Head of caudate nucleus (tissue), 42 donors: ENCODE measurements at regions of chr20 and their contacts with region 1.

Region 1: DNA sequence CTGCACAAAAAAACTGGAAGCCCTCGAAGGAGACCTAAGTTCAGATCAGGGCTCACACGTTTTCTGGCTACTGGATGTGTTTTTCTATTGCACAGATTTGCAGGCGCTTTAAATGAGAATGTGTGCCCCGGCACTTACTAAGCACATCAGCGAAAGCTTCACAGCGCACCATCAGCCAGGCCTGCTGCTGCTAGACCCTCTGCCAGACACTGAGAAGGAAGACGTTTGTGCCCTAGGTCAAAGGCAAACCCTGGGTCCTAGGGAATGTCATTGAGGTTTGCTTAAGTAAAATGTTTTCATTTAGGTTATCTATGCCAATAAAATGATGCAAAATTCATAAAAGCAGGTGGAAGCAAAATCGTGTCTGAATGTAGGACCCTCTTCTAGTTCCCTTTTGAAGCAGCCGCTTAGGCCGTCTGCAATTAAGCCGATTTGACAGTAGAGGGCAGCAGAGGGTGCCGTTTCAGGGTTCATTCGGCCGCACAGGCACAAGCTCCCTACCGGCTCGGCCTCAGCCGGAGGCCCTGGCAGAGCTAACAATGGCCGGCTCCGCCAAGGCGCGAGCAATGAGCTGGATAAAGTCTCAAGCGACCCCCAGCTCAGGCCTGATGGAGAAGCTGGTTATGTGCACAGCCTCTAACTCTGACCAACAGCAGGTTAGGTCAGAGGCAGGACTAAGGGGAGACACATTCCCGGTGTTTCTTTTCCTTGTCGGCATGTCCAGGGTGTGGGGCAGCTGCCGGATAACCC is 107.2 kb upstream of the FOXA2 start:
- DNase-seq: peak; percentile 62 to 90 (median 79)

Region 2: DNA sequence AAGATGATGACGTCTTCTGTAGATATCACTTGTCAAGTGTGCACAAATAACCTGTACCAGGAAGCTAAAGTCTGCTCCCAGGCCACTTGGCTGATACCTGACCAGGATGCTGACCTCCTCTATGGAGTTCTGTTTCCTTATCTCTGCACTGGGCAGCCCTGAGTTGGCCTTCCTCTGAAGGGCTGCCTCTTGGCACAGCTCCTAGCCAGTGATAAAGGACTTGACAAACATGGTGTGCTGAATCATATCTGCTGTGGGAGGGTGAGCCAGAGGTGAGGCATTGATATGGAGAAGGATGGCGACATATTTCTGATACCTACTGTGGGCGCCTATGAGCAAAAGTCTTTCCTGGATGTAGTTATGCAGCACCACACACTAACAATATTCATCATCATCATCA is 74.4 kb before region 1 on chr20:
- intact Hi-C with region 1: no loop called
- DNase-seq: no peak

Region 3: DNA sequence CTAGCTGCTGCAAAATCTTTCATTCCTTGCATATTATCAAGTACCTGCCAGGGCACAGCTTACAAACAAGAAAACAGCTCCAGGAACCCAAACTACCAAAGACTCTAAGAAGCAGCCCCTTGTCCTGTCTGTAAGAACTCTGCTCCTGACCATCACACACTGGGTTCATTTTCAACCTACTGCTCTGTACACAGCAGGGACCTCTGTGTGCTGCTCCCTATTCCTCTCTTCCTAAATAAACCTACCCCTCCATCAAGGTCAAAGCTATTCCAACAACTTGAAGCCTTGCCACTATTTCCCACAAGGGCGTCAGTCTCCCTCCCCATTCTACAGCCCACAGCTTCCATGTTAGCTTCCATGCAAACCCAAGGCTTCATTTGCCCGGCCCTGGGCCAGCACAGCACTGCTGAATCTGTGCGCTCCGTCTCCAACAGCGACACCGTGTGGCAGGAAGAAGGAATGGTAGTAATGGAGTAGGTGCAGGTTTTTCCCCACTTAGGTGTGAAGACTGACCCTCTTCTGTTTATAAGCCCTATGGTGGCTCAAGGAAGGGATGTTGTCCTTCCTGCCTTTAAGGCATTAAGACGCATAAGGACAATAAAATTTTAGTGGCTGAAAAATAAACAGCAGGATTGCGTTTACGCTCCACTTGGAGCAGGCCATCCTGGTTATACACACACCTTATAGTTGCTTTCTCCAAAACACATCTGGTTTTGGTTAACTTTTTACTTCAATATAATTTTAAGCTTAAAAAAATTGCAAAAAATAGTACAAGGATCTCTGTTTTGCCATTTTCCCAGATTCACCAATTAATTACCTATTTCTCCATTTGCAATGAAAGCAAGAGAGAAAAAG is 543.9 kb after region 1 on chr20:
- intact Hi-C with region 1: loop called (anchors 10 kb)
- DNase-seq: peak in 32 of 42 donors; percentile 19 to 76 (median 50)

Region 4: DNA sequence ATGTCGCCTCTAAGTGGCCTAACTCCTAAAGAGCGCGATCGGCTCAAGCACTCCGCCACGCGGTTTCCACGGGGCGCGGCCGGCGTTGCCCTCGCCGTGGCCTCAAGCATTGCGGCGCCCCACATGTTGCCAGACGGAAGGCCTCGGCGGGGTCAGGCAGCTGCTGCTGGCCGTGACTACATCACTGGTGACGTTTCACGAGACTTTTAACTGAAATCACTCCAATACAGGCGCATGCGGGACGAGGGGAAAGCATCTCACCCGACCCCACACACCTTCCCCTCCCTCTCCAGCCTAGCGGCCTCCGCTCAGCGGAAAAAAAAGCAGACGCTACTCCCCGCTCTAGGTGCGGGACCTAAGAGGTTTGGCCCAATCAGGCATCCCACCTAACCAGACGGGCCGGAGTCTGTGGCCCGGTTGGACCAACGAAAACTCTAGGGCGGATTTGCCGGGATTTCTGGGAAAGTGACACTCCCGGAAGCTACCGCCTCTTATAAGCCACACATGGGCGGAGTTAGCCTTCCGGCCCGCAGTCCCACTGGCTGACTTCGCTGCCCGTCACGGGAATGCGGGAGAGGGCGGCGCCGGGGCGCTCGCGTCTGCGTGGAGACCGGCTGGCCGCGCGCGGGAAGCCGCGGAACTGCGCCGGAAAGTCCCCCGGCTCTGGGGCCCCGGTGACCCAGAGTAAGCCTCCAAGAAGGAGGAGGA is 658.8 kb after region 1 on chr20 and contains the start of gene NXT1:
- intact Hi-C with region 1: loop called (anchors 10 kb)
- DNase-seq: peak; percentile 95 to 99 (median 98)